ENCODE measurements at regions of chr20 and their contacts with region 1.

Region 1: GRCh38 chr20:63537525-63538203 is 488 bp upstream of the PTK6 start:
- DNase-seq: peak; percentile 99
- CTCF ChIP-seq: peak; percentile 97

Region 2: DNA sequence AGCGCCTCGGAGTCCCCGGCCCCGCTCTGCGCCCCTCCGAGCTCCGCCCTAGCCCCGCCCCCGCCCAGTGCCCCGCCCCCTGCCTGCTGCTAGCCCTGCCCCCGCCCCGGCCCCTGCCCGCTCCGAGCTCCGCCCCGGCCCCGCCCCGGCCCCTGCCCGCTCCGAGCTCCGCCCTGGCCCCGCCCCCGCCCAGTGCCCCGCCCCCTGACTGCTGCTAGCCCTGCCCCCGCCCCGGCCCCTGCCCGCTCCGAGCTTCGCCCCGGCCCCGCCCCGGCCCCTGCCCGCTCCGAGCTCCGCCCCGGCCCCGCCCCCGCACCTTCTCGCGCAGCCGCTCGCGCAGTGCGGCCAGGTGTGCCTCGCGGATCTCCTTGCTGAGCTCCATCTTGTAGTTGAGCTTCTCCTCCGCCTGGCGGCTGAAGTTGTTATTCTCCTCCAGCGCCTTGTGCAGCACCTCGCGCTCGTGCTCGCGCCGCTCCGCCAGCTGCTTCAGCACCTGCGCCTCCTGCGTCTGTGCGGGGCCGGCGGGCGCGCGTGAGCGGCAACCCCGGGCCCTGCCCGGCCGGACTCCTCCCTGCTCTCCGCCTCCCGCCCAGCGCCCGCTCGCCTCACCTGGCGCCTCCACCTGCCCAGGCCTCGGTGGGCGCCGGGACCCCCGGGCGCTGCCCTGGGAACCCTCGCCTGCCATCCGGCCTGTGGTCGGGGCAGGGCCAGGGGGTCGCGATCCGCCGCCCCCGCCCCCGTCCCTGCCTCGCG is 104.3 kb after region 1 on chr20:
- in situ Hi-C with region 1: no loop called
- DNase-seq: peak; percentile 98
- CTCF ChIP-seq: peak; percentile 40

Region 3: DNA sequence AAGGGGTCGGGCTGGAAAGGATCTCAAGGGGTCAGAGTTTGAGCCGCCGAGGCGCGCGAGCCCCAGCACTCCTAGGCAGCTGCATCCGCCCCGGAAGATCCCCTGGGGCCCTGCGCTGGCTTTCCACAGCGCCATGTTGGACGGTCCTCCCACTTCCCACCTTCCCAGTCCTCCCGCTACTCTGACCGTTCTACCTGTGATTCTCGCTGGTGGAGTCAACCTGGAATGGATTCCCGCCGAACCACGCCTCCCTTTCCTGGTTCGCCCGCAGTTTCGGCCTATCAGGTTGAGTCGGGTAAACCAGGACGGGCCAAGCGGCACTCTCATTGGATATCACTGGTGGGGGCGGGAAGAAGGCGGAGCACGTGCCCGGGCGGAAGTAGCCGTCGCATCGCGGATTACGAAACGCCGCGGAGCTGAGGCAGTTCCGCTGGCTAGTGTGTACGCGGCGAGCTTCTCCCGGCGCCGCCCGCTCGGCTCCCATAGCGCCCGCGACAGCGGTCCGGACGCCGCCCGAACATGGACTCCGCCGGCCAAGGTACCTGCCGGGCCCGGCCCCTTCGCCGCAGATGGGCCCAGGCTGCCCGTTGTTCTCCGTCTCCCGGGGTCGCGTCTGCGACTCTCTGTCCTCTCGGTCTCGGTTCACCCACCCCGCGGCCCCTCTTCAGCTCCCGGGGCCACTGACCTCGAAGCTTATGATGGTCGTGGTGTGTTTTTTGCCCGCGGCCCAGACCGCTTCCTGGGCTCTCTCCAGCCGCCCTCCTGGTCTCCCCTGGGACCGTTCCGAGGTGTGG is 327.4 kb after region 1 on chr20 and contains the start of gene TPD52L2:
- in situ Hi-C with region 1: loop called (anchors 25 kb)
- DNase-seq: peak; percentile 97
- CTCF ChIP-seq: no peak